Posterior cingulate gyrus (tissue), 11 donors: ENCODE measurements at regions of chr1 and their contacts with region 1.

Region 1: DNA sequence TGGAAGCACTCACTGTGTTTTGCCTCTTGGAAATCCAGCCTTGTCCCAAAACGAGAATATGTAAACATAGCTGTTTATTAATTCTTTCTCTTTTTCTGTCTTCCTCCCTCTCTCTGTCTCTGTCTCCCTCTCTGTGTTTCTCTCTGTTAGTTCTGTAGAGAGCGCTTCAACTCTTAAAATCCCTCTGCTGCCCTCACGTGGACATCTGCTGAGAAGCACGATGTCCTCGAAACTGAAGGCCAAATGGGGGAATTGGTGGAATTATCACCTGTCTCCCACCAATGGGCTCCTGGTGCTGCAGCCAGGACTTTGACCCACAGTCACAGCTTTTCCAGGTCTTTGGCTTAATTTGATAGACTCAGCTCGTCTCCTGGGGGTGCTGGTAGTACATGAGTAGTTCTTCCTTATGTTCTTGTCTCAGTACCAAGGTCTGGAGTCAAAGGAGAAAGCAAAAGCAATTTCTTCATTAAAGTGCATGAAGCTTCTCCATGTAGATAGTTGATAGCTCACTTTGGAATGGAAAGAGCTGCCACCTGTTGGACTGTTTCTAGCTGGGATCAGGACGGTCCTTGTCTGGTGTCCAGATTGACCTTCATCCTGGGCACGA is 5.5 kb upstream of the GBP6 start:
- DNase-seq: peak; percentile 32 to 92 (median 74)

Region 2: DNA sequence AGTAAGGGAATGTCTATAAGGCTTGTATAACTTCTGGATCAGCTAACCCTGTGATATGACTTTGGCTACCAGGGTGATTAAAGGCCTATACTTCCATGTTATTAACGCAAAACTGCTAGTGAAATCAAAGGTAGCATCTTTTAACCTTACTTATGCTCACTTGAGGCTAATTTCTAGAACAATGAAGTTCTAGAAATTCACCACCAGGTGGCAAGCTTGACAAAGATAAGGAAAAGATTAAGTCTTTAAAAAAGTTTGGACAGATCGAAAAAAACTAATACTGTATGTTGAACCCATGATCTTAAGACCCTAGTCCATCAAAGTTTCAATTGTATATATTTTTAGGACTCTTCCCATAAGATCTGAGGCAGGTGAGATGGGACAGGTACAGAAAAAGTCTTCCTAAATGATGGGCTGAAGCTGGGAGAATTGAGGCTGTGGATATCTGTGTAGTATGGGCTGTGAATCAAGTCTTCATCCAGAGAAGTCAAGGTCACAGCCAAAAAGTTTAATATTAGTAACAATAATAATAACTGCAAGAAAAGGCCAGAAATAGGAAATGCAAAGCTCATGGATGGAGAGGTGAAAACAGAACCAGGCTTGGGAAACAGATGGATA is 384.8 kb before region 1 on chr1:
- intact Hi-C with region 1: loop called (anchors 2 kb)
- DNase-seq: no peak

Region 3: GRCh38 chr1:88998716-88999115 is 359.7 kb before region 1 on chr1:
- intact Hi-C with region 1: loop called (anchors 1 kb)
- DNase-seq: peak in 1 of 10 donors; percentile 76

Region 4: DNA sequence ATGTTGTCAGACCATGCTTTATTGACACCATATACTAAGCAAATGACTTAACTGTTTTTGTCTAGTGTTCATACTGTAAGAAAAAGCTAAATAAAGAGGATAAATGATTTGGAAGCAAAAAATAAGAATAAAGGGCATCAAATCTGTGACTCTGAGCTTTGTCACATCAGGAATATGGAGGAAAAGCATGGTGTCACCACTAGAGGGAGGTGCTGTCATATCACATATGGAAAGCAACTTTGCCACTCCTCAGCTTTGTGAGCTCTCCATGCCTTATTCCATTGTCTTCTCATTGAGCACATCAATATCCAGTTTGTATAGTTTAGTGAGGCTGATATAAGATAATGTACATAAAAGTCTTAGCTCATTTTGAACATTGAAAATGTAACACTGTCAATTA is 272.6 kb before region 1 on chr1:
- intact Hi-C with region 1: loop called (anchors 10 kb)
- DNase-seq: peak in 1 of 10 donors; percentile 25

Region 5: DNA sequence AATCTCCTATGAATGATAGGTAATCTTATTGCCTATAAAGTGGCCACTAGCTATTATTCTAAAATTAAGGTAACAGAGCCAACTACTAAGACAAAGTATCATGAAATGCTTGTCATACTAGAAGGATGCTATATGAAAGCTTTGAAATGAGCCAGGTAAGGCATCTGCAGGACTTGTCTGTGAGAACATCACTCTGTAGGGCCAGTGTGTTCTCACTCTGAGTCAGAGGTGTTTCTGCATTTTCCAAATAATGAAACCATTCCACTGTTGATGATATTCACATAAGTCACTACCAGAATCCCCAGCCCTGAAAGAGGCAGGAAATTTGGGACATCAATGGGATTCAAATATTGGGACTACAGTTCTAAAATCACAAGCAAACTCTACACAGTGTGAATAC is 59.9 kb before region 1 on chr1:
- intact Hi-C with region 1: no loop called
- DNase-seq: no peak